HepG2 (cell line): ENCODE measurements at regions of chr18 and their contacts with region 1.

Region 1: DNA sequence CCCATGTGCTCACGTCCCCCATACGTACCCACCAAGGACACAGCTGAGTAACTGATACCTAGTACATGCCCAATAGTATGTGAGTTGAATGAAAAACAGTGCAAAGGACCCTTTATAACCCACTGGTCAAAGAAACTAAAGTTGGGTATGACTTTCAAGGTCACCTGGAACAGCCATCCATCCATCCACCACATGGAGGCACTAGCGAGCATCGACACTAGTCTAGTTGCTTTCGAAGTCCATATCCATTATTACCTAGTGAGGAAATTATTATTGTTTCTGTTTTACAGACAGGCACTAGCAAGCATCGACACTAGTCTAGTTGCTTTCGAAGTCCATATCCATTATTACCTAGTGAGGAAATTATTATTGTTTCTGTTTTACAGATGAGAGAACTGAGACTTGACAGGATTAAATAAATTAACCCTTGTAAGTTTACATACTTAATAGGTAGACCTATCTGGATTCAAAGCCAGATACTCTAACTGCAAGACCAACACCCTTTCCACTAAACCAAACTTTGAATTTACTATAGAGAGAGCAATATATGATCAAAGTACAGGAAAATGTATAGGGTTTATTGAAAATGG is 233.7 kb downstream of the METTL4 start:
- DNase-seq: peak; percentile 17
- ATAC-seq: peak; percentile 57
- H3K4me3 ChIP-seq: no peak overlapping the region
- H3K27ac ChIP-seq: no peak overlapping the region
- H3K4me1 ChIP-seq: no peaks in the 10 kb centered on the region
- H3K27me3 ChIP-seq: no peaks in the 10 kb centered on the region
- CTCF ChIP-seq: peak; percentile 54
- EP300 ChIP-seq: no peak
- POLR2A ChIP-seq: no peak
- RAD21 ChIP-seq: no peak

Region 2: GRCh38 chr18:2104620-2105462 is 232.8 kb before region 1 on chr18:
- CTCF ChIA-PET with region 1: no interaction called
- POLR2A ChIA-PET with region 1: no interaction called
- in situ Hi-C with region 1: no loop called
- intact Hi-C with region 1: no loop called
- DNase-seq: peak; percentile 30
- ATAC-seq: peak; percentile 96
- H3K4me3 ChIP-seq: no peak overlapping the region
- H3K27ac ChIP-seq: no peak overlapping the region
- H3K4me1 ChIP-seq: no peaks in the 10 kb centered on the region
- H3K27me3 ChIP-seq: no peaks in the 10 kb centered on the region
- CTCF ChIP-seq: peak; percentile 87
- EP300 ChIP-seq: no peak
- POLR2A ChIP-seq: no peak
- RAD21 ChIP-seq: no peak

Region 3: DNA sequence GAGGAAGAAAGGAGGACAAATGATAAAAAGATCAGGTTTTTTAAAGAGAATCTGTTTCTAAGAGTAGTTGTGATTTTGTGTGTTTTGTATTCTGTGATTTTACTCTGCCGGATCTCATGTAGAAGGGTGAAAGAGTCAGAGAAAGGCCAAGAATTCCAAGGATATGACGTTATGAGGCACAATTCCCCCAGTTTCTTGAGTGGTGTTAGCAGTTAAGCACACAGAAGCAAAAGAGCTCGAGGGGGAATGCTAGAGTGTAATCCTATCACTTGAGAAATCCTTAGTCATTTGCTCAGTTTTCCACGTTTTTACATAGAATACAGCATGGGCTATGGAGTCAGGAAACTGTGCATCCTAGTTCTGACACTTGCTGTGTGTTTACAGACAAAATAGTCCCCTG is 198.8 kb after region 1 on chr18:
- CTCF ChIA-PET with region 1: interaction called, 15 read pairs
- POLR2A ChIA-PET with region 1: no interaction called
- in situ Hi-C with region 1: loop called (anchors 25 kb)
- intact Hi-C with region 1: no loop called
- DNase-seq: no peak
- ATAC-seq: no peak
- H3K4me3 ChIP-seq: no peak overlapping the region
- H3K27ac ChIP-seq: no peak overlapping the region
- H3K4me1 ChIP-seq: no peaks in the 10 kb centered on the region
- H3K27me3 ChIP-seq: no peaks in the 10 kb centered on the region
- CTCF ChIP-seq: no peak
- EP300 ChIP-seq: no peak
- POLR2A ChIP-seq: no peak
- RAD21 ChIP-seq: no peak

Region 4: DNA sequence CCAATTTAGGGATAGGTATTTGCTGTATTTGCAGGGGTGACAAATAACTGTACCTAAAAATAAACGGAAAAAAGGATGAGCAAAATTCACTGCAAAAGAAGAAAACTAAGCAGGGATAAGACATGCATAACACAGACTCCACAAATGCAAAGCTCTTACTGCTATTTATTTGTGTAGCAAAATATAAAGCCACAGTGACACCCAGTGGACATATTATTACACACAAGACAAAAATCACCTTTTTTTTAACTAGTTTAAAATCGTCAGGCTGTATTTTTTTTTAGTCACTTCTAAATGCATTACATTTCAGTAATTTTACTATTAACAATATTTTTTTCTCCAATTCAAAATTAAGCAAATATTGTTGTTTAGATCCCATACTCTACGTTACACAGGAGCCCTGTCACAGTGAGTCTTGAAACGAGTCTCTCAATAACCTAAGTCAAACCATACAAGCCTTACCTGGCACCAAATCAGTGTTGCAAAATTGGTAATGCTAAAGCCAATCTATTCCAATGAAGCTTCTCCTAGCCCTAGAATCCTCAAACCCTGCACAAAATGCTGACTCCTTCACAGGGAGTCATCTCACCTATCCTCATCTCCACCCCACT is 209.9 kb after region 1 on chr18:
- CTCF ChIA-PET with region 1: interaction called, 15 read pairs
- POLR2A ChIA-PET with region 1: no interaction called
- in situ Hi-C with region 1: loop called (anchors 25 kb)
- intact Hi-C with region 1: no loop called
- DNase-seq: peak; percentile 20
- ATAC-seq: peak; percentile 48; the same call in 2 of the 3 replicates
- H3K4me3 ChIP-seq: no peak overlapping the region
- H3K27ac ChIP-seq: no peak overlapping the region
- H3K4me1 ChIP-seq: no peaks in the 10 kb centered on the region
- H3K27me3 ChIP-seq: no peaks in the 10 kb centered on the region
- CTCF ChIP-seq: peak; percentile 47
- EP300 ChIP-seq: no peak
- POLR2A ChIP-seq: no peak
- RAD21 ChIP-seq: no peak